Astrocyte of the cerebellum (primary cell): ENCODE measurements at regions of chr16 and their contacts with region 1.

Region 1: DNA sequence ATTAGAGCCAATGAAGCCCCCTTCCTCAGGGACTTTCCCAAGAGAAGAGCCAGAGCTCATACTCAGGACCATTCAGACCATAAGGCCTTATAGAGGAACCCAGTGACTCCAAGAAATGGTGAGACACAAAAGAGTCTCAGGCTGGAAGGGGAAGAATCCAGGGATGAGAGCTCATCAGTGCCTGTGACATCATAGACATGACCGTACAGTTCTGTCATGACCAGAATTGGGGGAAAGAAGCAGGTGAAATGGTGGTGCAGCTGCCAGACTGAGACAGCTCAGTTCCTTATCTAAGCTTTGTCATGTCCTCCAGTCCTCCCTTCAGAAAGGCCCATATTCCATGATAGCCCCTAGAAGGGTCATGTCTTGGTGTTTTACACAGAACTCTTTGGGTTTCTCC is 18.7 kb downstream of the OR2C1 start:
- DNase-seq: no peak
- H3K4me3 ChIP-seq: no peak overlapping the region
- CTCF ChIP-seq: no peak

Region 2: DNA sequence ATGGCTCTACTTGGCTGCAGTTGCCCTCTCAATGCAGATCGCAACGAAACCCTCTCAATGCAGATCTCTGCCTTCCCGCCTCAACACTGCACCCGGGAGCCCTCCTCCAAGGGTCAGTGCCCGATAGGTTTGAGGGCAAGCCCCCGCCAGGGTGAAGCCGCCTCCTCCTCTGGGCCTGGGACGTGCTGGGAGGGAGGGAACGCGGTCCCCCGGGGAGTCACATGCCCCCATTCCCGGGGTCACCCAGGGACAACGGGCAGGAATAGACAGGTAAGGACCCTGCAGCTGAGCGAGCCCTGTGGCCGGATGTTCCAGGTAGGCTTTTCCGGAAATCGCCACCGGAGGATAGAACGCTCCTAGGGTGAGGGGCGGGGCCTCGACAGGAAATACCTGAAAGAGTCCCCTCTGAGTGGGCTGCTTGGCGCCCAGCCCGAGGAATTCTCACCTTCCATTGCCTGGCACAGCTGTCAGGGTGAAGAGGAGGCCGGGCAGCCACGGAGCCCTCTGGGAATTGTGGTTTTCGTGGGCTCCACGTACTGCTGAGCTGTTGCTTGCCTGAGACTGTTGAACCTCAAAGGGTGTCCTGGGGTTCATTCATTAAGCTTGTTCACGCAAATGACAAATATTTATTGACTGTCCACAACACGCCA is 39.5 kb after region 1 on chr16:
- in situ Hi-C with region 1: loop called (anchors 5 kb)
- DNase-seq: no peak
- H3K4me3 ChIP-seq: no peak overlapping the region
- CTCF ChIP-seq: no peak